ENCODE measurements at regions of chr19 and their contacts with region 1.

Region 1: GRCh38 chr19:55339048-55339888 is at the start of gene KMT5C:
- DNase-seq: peak; percentile 100
- H3K4me3 ChIP-seq: peak within 1 kb of the TSS; percentile 53 to 84 (median 74)
- H3K27ac ChIP-seq: peak within 1 kb of the TSS; percentile 80 to 99 (median 95)
- H3K27me3 ChIP-seq: no peaks in the 10 kb centered on the region
- CTCF ChIP-seq: peak in 42 of 56 donors; percentile 0 to 58 (median 36)
- total RNA-seq, gene KMT5C: 9.5 to 44.0 (median 20.0) TPM

Region 2: GRCh38 chr19:55461259-55461973 is 122.1 kb after region 1 on chr19 and contains the start of gene ISOC2:
- intact Hi-C with region 1: loop called in 1 of 2 experiments (anchors 5 kb)
- DNase-seq: peak; percentile 100
- H3K4me3 ChIP-seq: peak within 1 kb of the TSS; percentile 61 to 100 (median 93)
- H3K27ac ChIP-seq: peak within 1 kb of the TSS; percentile 46 to 91 (median 84)
- H3K27me3 ChIP-seq: no peaks in the 10 kb centered on the region
- CTCF ChIP-seq: peak in 29 of 56 donors; percentile 11 to 62 (median 31)
- total RNA-seq, gene ISOC2: 25.1 to 48.5 (median 36.7) TPM